Activated naive CD8-positive, alpha-beta T cell treated with anti-CD3 and anti-CD28 coated beads, Interleukin-2, amount 10 ng/mL, durations not matched to agents 7 days and 5 days (primary cell): ENCODE measurements at regions of chr17 and their contacts with region 1.

Region 1: DNA sequence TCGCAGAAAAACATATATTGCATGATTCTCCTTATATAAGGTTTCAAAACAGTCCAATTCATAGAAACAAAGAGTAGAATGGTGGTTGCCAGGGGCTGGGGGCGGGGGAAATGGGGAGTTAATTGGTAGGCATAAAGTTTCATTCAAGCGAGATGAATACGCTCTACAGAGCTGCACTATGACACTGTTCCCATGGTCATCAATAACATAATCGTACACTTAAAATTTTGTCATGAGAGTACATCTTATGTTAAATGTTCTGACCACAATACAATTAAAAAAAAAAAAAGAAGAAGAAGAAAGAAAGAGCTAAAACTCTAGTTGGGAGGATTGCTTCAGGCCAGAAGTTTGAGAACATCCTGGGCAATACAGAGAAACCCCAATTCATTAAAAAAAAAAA is 5.1 kb downstream of the PIP4K2B start:
- DNase-seq: no peak
- ATAC-seq: no peak
- H3K4me3 Mint-ChIP-seq: no peak overlapping the region
- H3K27ac Mint-ChIP-seq: no peak overlapping the region
- H3K4me1 Mint-ChIP-seq: peaks cover 30% of the 10 kb centered on the region
- H3K27me3 Mint-ChIP-seq: no peaks in the 10 kb centered on the region

Region 2: DNA sequence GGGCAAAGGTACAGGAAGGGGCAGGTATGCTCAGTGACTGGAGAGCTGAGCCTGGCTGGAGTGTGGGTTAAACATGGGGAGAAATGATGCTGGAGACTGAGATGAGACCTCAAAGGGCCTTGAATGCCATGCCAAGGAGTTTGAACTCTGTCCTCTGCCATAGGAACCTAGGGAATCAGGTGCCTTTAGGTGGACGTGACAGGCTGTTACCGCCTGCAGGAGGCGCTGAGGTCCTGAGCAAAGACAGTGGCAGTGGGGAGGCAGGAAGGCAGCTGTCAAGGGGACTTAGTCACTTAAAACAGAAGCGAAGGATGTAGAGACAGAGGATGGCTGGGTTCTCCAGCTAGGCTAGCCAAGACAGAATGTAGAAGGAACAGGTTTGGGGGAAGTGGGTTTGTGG is 32.6 kb before region 1 on chr17:
- POLR2A ChIA-PET with region 1: no interaction called
- DNase-seq: peak; percentile 63
- ATAC-seq: peak; percentile 82
- H3K4me3 Mint-ChIP-seq: no peak overlapping the region
- H3K27ac Mint-ChIP-seq: peak overlapping the region; percentile 72
- H3K4me1 Mint-ChIP-seq: peaks cover 20% of the 10 kb centered on the region
- H3K27me3 Mint-ChIP-seq: no peaks in the 10 kb centered on the region

Region 3: GRCh38 chr17:38967290-38967738 is 173.1 kb after region 1 on chr17 and contains the start of gene FBXO47:
- POLR2A ChIA-PET with region 1: interaction called, 14 read pairs
- DNase-seq: peak; percentile 77
- ATAC-seq: peak; percentile 99
- H3K4me3 Mint-ChIP-seq: peak within 1 kb of the TSS; percentile 79
- H3K27ac Mint-ChIP-seq: peak within 1 kb of the TSS; percentile 72
- H3K4me1 Mint-ChIP-seq: peaks cover 15% of the 10 kb centered on the region
- H3K27me3 Mint-ChIP-seq: no peaks in the 10 kb centered on the region
- total RNA-seq, gene FBXO47: 0.14 TPM in 1 of 2 experiments, not detected in the other